Psoas muscle (tissue), 8 donors: ENCODE measurements at regions of chr1 and their contacts with region 1.

Region 1: GRCh38 chr1:117067533-117068370 is 7.6 kb downstream of the TTF2 start:
- DNase-seq: peak; percentile 37 to 72
- ATAC-seq: peak; percentile 89 to 98 (median 96)
- H3K4me3 ChIP-seq: no peak overlapping the region
- H3K27ac ChIP-seq: no peak overlapping the region
- H3K4me1 ChIP-seq: peaks cover 2% of the 10 kb centered on the region
- H3K27me3 ChIP-seq: no peaks in the 10 kb centered on the region
- CTCF ChIP-seq: peak; percentile 89

Region 2: GRCh38 chr1:116971258-116971860 is 96.4 kb before region 1 on chr1:
- intact Hi-C with region 1: no loop called
- DNase-seq: no peak
- ATAC-seq: no peak
- H3K4me3 ChIP-seq: no peak overlapping the region
- H3K27ac ChIP-seq: no peak overlapping the region
- H3K4me1 ChIP-seq: no peaks in the 10 kb centered on the region
- H3K27me3 ChIP-seq: no peaks in the 10 kb centered on the region
- CTCF ChIP-seq: no peak

Region 3: GRCh38 chr1:117026361-117026760 is 41.4 kb before region 1 on chr1:
- intact Hi-C with region 1: no loop called
- DNase-seq: no peak
- ATAC-seq: no peak
- H3K4me3 ChIP-seq: no peak overlapping the region
- H3K27ac ChIP-seq: no peak overlapping the region
- H3K4me1 ChIP-seq: no peaks in the 10 kb centered on the region
- H3K27me3 ChIP-seq: no peaks in the 10 kb centered on the region
- CTCF ChIP-seq: no peak

Region 4: GRCh38 chr1:117128323-117129079 is 60.7 kb after region 1 on chr1:
- intact Hi-C with region 1: loop called (anchors 1 to 2 kb)
- DNase-seq: no peak
- ATAC-seq: peak; percentile 38 to 78 (median 60)
- H3K4me3 ChIP-seq: peak overlapping the region; percentile 3
- H3K27ac ChIP-seq: no peak overlapping the region
- H3K4me1 ChIP-seq: peaks cover 14% of the 10 kb centered on the region
- H3K27me3 ChIP-seq: no peaks in the 10 kb centered on the region
- CTCF ChIP-seq: peak; percentile 58

Region 5: DNA sequence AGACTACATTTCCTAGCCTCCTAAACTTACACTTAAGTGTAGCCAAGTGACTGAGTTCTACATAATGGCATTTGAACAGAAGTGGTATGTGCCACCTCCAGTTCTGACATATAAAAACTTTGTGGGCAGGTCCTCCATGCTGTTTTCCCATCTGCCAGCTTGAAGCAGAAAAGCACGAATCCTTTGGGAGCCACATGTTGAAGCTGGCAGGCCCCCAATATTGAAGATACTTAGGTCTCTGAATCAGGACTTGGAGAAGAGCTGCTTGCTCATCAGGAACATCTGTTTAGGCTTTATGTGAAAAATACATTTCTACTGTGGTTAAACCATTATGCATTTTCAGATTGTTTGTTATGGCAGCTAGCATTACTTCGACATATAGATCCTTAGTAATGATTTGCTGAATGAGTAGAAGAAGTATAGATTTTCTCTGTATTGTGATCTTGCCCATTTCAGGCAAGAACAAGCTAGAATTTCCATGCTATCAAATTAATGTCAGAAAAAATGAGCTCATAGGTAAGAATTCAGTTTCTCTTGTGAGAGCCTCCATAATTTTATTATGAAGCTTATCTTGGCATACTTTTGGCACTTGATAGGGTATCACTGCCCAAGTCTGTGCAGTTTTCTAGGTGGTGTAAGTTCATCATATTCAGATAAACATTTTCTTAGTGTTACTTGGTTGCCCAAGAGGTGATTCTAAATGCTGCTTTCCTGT is 793.3 kb after region 1 on chr1:
- intact Hi-C with region 1: no loop called
- DNase-seq: no peak
- ATAC-seq: no peak
- H3K4me3 ChIP-seq: no peak overlapping the region
- H3K27ac ChIP-seq: no peak overlapping the region
- H3K4me1 ChIP-seq: no peaks in the 10 kb centered on the region
- H3K27me3 ChIP-seq: no peaks in the 10 kb centered on the region
- CTCF ChIP-seq: no peak